A549 (cell line): ENCODE measurements at regions of chr2 and their contacts with region 1.

Region 1: DNA sequence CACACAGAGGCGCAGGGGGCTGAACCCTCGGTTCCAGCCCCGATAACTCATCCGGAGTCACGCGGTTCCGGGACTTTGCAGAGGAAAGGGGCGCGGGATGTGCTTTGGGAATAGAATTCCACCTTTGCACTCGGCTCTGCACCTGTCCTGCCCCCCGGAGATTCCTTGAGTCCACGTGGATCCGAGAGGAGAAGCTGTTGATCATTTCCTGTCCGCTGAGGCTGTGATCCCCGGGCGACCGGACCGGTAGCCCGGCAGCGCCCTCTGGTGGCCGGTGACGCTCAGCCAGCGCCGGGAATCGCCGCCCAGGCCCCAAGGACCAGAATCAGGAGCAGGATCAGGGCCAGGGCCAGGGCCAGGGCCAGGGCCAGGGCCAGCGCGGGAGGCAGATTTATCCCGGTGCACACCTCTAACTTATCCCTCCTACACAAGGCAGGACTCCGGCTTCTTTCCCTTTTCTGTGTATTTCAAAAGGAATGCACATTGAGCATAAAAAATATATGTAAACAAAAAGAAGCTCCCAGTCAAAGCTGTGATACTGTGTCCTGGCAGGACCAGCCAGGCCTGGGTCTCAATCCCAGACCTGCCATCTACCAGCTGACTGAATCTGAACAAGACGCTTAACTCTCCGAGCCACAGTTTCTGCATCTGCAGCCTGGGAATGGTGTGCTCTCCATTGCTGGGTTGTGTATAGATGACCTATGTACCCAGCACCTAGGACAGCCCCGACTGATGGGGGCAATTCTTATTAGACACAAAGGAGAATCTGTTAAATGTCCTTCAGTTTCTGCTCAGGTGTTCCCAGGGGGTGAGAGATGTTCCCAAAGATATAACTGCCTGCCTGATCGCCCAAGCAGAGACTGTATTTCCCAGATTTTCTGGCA is 8.5 kb upstream of the SPATA3 start:
- DNase-seq: peak; percentile 75 to 88
- ATAC-seq: peak; percentile 93 to 98
- H3K4me3 ChIP-seq: peak overlapping the region; percentile 50
- H3K27ac ChIP-seq: peak overlapping the region; percentile 71 to 84
- H3K4me1 ChIP-seq: 0 out of 3 replicates have a peak, but pooled peaks cover 2% of the 10 kb centered on the region
- CTCF ChIP-seq: peak; percentile 92
- EP300 ChIP-seq: no peak
- POLR2A ChIP-seq: no peak
- RAD21 ChIP-seq: peak; percentile 92 to 95

Region 2: GRCh38 chr2:230496891-230497290 is 490.5 kb before region 1 on chr2:
- CTCF ChIA-PET with region 1: no interaction called
- POLR2A ChIA-PET with region 1: no interaction called
- DNase-seq: no peak
- ATAC-seq: no peak
- H3K4me3 ChIP-seq: no peak overlapping the region
- H3K27ac ChIP-seq: no peak overlapping the region
- H3K4me1 ChIP-seq: no peaks in the 10 kb centered on the region
- CTCF ChIP-seq: no peak
- EP300 ChIP-seq: no peak
- POLR2A ChIP-seq: no peak
- RAD21 ChIP-seq: no peak

Region 3: DNA sequence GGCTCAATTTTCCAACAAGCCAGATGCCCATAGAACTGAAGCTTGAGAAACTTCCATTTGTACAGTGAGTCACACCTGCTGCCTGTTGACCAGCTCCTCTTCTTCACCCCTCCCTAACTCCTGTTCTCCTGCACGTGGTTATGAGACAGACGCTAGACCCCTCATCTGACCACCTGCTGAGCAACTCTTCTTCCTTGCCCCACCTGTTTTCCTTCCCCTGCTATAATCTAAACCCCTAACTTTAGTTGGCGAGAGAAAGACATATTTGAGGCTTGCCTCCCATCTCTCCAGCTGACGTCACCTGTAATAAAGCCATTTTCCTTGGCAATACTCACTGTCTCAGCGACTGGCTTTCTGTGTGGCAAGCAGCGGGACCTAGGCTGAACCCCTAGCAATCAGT is 144.9 kb before region 1 on chr2:
- CTCF ChIA-PET with region 1: interaction called, 16 read pairs
- POLR2A ChIA-PET with region 1: no interaction called
- DNase-seq: no peak
- ATAC-seq: peak; percentile 66 to 73; a peak in 5 of 6 replicates
- H3K4me3 ChIP-seq: no peak overlapping the region
- H3K27ac ChIP-seq: no peak overlapping the region
- H3K4me1 ChIP-seq: peaks cover 7% of the 10 kb centered on the region; the same call in 2 of the 3 replicates
- CTCF ChIP-seq: no peak
- EP300 ChIP-seq: no peak
- POLR2A ChIP-seq: no peak
- RAD21 ChIP-seq: no peak

Region 4: DNA sequence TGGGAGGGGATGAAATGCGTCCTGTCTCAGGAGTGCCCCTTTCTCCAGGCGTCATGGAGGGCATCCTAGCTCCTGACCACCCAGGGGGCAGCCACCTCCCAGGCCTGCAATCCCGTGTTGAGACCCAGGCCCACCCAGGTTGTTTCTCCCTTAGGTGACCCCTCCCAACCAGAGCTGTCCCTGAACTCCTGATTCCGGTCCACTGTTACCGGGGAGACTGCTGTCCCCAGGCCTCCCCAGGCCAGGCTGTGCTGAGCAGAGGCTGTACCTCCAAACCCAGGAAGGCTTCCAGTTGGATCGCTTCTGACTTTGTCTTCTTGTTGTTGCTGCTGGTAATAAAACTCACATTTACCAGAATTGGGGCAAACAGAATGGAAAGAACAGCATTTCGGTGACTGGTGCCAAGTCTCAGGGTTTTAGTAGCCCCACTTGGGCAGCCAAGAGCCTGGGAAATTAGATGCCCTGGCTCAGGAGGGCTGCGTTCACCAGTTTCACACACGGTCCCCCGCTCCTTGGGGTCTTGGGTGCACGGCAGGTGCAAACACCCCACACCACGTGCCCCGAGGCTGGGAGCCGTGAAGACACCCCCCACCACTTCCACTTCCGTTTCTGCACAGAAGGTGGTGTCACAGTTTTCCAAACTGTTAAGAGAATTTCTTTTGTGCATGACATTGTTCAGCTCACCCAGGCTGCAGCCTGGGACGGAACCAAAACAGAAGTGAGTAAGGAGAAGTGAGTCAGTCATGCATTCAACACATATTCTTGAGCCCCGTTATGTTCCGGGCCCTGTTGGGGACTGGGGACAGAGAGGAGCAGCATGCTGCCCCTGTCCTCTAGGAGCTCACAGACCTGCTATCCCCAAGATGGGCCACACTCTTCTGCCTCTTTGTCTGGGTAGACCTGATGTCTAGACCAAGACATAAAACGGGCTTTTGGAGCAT is 93.3 kb before region 1 on chr2:
- CTCF ChIA-PET with region 1: interaction called, 45 read pairs
- POLR2A ChIA-PET with region 1: no interaction called
- DNase-seq: no peak
- ATAC-seq: no peak
- H3K4me3 ChIP-seq: no peak overlapping the region
- H3K27ac ChIP-seq: no peak overlapping the region
- H3K4me1 ChIP-seq: no peaks in the 10 kb centered on the region
- CTCF ChIP-seq: no peak
- EP300 ChIP-seq: no peak
- POLR2A ChIP-seq: no peak
- RAD21 ChIP-seq: no peak

Region 5: GRCh38 chr2:230913406-230914143 is 73.8 kb before region 1 on chr2:
- CTCF ChIA-PET with region 1: interaction called, 34 read pairs
- POLR2A ChIA-PET with region 1: no interaction called
- DNase-seq: peak; percentile 30 to 46
- ATAC-seq: peak in 1 of 2 experiments; percentile 70; a peak in 3 of 6 replicates
- H3K4me3 ChIP-seq: no peak overlapping the region
- H3K27ac ChIP-seq: no peak overlapping the region
- H3K4me1 ChIP-seq: peaks cover 6% of the 10 kb centered on the region
- CTCF ChIP-seq: no peak; the same call in 2 of the 3 replicates
- EP300 ChIP-seq: no peak
- POLR2A ChIP-seq: no peak
- RAD21 ChIP-seq: peak in 1 of 2 experiments; percentile 16; a peak in 1 of 5 replicates

Region 6: GRCh38 chr2:230951396-230951795 is 36.0 kb before region 1 on chr2:
- CTCF ChIA-PET with region 1: interaction called, 11 read pairs
- POLR2A ChIA-PET with region 1: no interaction called
- DNase-seq: no peak
- ATAC-seq: no peak
- H3K4me3 ChIP-seq: no peak overlapping the region
- H3K27ac ChIP-seq: no peak overlapping the region
- H3K4me1 ChIP-seq: no peaks in the 10 kb centered on the region
- CTCF ChIP-seq: no peak
- EP300 ChIP-seq: no peak
- POLR2A ChIP-seq: no peak
- RAD21 ChIP-seq: no peak

Region 7: DNA sequence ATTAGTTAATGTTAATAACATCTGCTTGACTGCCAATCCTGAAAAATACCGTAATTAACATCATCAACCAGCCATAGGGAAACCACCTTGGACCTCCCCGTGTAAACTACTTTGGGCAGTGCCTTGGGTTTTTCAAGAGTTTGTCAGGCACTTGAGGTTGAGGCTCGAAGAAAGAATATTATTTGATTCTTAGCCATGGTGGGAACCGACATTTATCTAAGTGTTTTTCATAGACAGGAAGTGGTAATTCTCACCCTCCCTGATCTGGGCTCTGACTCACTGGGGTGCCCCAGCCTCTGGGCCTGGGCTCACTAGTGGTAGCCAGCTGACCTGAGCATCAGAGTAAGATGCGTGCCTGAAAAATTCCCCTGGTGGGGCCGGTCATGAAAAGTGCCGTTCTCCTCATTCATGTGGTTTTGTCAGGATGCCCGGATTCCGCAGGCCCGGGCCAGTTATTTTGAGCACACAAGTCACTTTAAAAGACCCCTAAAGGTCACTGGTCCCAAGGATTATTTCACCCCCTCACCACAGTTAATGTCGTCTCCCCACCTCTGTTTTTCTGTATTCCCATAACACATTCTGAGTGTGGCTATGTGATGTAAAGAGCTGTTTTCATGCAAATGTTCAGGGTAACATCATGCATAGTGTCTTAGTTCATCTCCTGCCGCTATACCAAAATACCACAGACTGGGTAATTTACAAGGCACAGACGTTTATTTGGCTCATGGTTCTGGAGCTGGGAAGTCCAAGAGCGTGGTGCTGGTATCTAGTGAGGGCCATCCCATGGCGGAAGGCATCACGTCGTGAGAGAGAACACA is 13.1 kb before region 1 on chr2:
- CTCF ChIA-PET with region 1: interaction called, 20 read pairs
- POLR2A ChIA-PET with region 1: no interaction called
- DNase-seq: no peak
- ATAC-seq: no peak
- H3K4me3 ChIP-seq: no peak overlapping the region
- H3K27ac ChIP-seq: no peak overlapping the region
- H3K4me1 ChIP-seq: no peaks in the 10 kb centered on the region
- CTCF ChIP-seq: no peak
- EP300 ChIP-seq: no peak
- POLR2A ChIP-seq: no peak
- RAD21 ChIP-seq: no peak

Region 8: DNA sequence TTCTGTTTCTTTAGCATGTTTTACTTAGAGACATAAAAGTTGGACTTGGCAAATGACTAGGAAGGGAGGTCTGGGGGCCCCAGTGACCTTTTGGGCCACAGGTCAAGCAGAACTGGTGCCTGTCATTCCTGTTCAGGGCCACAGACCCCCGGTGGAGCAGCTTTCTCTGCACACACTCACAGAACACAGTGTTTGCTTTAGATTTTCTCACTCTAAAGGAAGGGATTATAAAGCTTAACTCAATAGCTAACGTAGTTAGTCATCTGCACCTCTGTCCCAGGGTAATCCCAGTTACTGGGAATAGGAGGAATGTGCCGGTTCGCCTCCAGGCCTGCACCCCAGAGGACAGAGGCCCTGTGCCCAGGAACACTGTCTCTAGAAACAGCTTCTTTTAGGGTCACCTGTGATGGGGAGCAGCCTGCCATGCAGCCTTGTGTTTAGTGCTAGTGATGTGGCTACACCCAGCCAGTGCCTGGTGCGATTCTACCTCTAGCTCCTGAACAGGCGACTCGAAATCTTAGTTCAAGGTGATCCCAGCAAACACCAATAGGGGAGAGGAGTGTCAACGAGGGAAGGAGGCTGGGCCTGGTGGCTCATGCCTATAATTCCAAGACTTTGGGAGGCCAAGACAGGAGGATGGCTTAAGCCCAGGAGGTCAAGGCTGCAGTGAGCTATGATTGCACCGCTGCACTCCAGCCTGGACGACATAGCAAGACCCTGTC is 20.1 kb after region 1 on chr2:
- CTCF ChIA-PET with region 1: interaction called, 22 read pairs
- POLR2A ChIA-PET with region 1: interaction called, 5 read pairs
- DNase-seq: no peak
- ATAC-seq: no peak; a peak in 1 of 6 replicates
- H3K4me3 ChIP-seq: no peak overlapping the region
- H3K27ac ChIP-seq: no peak overlapping the region
- H3K4me1 ChIP-seq: no peaks in the 10 kb centered on the region
- CTCF ChIP-seq: no peak
- EP300 ChIP-seq: no peak
- POLR2A ChIP-seq: no peak
- RAD21 ChIP-seq: no peak